ENCODE measurements at regions of chr4 and their contacts with region 1.

Region 1: GRCh38 chr4:87853108-87853507 is 20.3 kb downstream of the MEPE start:
- DNase-seq: no peak
- H3K4me3 ChIP-seq: no peak overlapping the region
- H3K27ac ChIP-seq: no peak overlapping the region
- H3K4me1 ChIP-seq: peaks cover 0 to 5% of the 10 kb centered on the region in 2 donors
- H3K27me3 ChIP-seq: no peaks in the 10 kb centered on the region
- CTCF ChIP-seq: peak in 4 of 6 experiments; percentile 12 to 54 (median 48)
- POLR2A ChIP-seq: no peak

Region 2: DNA sequence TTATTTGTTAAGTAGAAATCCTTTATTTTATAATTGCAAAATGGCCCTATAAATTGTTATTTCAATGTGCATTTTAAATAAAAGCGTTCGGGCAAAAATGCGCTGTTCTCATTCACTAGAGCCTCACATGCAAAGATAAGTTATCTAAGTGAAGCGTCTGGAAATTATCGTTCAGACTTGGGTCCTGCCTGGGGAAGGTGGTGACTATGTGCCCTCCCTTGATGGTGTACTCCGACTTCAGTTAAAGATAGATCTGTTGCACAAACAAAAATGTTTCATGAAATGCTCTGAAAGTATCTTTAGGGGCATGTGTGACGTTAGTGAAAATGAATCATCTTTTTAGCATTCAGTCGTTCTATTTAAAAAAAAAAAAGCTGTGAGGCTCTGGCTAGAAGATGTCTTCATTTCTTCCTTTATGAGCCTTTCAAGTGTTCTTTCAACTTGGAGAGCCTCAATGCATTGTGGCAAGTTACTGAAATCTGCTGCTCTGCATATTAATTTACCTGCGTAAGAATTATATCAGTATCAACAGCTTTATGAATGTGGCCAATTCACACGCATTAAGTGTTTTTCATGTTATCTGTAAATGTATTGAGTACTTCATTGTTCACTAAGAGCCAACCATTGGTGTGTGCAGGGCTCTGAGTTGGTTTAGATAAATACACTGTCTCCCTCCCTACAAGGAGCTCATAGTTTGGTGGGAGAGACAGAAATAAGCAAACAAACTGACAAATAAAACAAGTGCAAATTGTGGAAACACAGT is 835.3 kb before region 1 on chr4:
- intact Hi-C with region 1: no loop called
- DNase-seq: no peak
- H3K4me3 ChIP-seq: no peak overlapping the region
- H3K27ac ChIP-seq: peak overlapping the region in 2 of 3 donors; percentile 44 to 53
- H3K4me1 ChIP-seq: peaks cover 56 to 83% of the 10 kb centered on the region in 2 donors
- H3K27me3 ChIP-seq: no peaks in the 10 kb centered on the region
- CTCF ChIP-seq: no peak
- POLR2A ChIP-seq: no peak

Region 3: DNA sequence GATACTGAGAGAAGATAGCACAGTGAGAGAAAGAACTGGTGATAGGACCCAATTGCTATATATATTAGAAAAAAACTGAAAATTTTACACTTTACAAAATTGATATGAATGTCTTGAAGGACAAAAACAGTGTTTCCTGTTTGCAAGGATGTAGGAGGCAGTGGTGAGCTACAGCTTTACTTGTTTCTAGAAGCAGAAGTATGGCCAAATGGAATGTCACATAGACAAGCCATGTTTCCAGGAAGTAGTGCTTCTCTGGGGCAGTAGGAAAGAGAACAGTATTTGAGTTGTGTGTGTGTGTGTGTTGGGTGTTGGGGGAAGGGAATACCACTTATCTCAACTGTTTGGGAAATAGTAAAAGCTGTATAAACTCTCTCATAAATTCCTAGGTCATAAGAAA is 114.6 kb before region 1 on chr4:
- intact Hi-C with region 1: no loop called
- DNase-seq: no peak
- H3K4me3 ChIP-seq: no peak overlapping the region
- H3K27ac ChIP-seq: no peak overlapping the region
- H3K4me1 ChIP-seq: no peaks in the 10 kb centered on the region
- H3K27me3 ChIP-seq: no peaks in the 10 kb centered on the region
- CTCF ChIP-seq: no peak
- POLR2A ChIP-seq: no peak

Region 4: GRCh38 chr4:87973283-87974169 is 120.4 kb after region 1 on chr4:
- intact Hi-C with region 1: loop called (anchors 5 kb)
- DNase-seq: peak; percentile 45 to 64
- H3K4me3 ChIP-seq: no peak overlapping the region
- H3K27ac ChIP-seq: no peak overlapping the region
- H3K4me1 ChIP-seq: peaks cover 5 to 6% of the 10 kb centered on the region in 2 donors
- H3K27me3 ChIP-seq: no peaks in the 10 kb centered on the region
- CTCF ChIP-seq: peak; percentile 54 to 75 (median 64)
- POLR2A ChIP-seq: no peak

Measured in thyroid gland (tissue), 4 donors.